CD8-positive, alpha-beta T cell (primary cell): ENCODE measurements at regions of chr5 and their contacts with region 1.

Region 1: GRCh38 chr5:98796197-98796972 is 22.9 kb downstream of the RGMB start:
- DNase-seq: peak in 7 of 9 experiments; percentile 17 to 62 (median 42)
- ATAC-seq: peak; percentile 62
- H3K4me3 ChIP-seq: no peak overlapping the region
- H3K4me3 Mint-ChIP-seq: no peak overlapping the region
- H3K27ac ChIP-seq: no peak overlapping the region
- H3K27ac Mint-ChIP-seq: no peak overlapping the region
- H3K4me1 ChIP-seq: no peaks in the 10 kb centered on the region
- H3K4me1 Mint-ChIP-seq: no peaks in the 10 kb centered on the region
- H3K27me3 ChIP-seq: no peaks in the 10 kb centered on the region
- H3K27me3 Mint-ChIP-seq: peaks cover 5% of the 10 kb centered on the region
- CTCF ChIP-seq: peak; percentile 78

Region 2: DNA sequence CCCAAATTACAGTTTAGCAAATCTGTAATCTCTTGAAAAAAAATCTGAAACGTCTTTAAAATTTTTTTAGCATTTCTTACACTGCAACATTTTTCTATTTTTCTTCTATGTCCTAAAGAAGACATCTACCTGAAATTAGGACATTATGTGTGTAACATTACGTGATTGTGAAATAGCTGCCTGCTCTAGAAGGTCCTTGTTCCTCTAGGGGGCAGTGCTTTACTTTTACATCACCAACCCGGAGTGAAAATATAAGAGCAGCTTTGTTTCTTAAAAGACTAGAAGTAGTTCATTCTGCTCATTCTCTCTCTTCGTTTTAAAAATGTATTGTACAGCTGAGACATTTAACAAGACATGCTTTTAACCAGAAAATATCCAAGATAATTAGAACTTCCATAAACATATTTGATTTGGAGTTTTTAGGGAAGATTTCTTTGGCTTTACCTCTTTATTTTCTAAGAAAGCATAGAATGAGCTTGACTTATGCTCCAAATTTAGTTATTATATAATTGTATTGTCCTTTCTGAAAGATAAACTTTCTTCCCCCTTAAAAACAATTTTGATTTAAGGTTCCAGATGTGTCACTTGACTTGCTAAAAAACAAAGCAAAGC is 1565.3 kb before region 1 on chr5:
- CTCF ChIA-PET with region 1: interaction called, 34 read pairs
- POLR2A ChIA-PET with region 1: no interaction called
- intact Hi-C with region 1: loop called in 1 of 2 experiments (anchors 2 kb)
- DNase-seq: peak in 3 of 9 experiments; percentile 13 to 62 (median 53)
- ATAC-seq: no peak
- H3K4me3 ChIP-seq: no peak overlapping the region
- H3K4me3 Mint-ChIP-seq: no peak overlapping the region
- H3K27ac ChIP-seq: no peak overlapping the region
- H3K27ac Mint-ChIP-seq: no peak overlapping the region
- H3K4me1 ChIP-seq: no peaks in the 10 kb centered on the region
- H3K4me1 Mint-ChIP-seq: no peaks in the 10 kb centered on the region
- H3K27me3 ChIP-seq: no peaks in the 10 kb centered on the region
- H3K27me3 Mint-ChIP-seq: peaks cover 2% of the 10 kb centered on the region
- CTCF ChIP-seq: peak; percentile 85

Region 3: GRCh38 chr5:98275980-98276379 is 520.4 kb before region 1 on chr5:
- CTCF ChIA-PET with region 1: no interaction called
- POLR2A ChIA-PET with region 1: no interaction called
- intact Hi-C with region 1: no loop called
- DNase-seq: no peak
- ATAC-seq: no peak
- H3K4me3 ChIP-seq: no peak overlapping the region
- H3K4me3 Mint-ChIP-seq: no peak overlapping the region
- H3K27ac ChIP-seq: no peak overlapping the region
- H3K27ac Mint-ChIP-seq: no peak overlapping the region
- H3K4me1 ChIP-seq: no peaks in the 10 kb centered on the region
- H3K4me1 Mint-ChIP-seq: no peaks in the 10 kb centered on the region
- H3K27me3 ChIP-seq: no peaks in the 10 kb centered on the region
- H3K27me3 Mint-ChIP-seq: no peaks in the 10 kb centered on the region
- CTCF ChIP-seq: no peak

Region 4: GRCh38 chr5:98690002-98690401 is 106.4 kb before region 1 on chr5:
- CTCF ChIA-PET with region 1: no interaction called
- POLR2A ChIA-PET with region 1: no interaction called
- intact Hi-C with region 1: no loop called
- DNase-seq: no peak
- ATAC-seq: no peak
- H3K4me3 ChIP-seq: no peak overlapping the region
- H3K4me3 Mint-ChIP-seq: no peak overlapping the region
- H3K27ac ChIP-seq: no peak overlapping the region
- H3K27ac Mint-ChIP-seq: no peak overlapping the region
- H3K4me1 ChIP-seq: no peaks in the 10 kb centered on the region
- H3K4me1 Mint-ChIP-seq: no peaks in the 10 kb centered on the region
- H3K27me3 ChIP-seq: no peaks in the 10 kb centered on the region
- H3K27me3 Mint-ChIP-seq: no peaks in the 10 kb centered on the region
- CTCF ChIP-seq: no peak

Region 5: DNA sequence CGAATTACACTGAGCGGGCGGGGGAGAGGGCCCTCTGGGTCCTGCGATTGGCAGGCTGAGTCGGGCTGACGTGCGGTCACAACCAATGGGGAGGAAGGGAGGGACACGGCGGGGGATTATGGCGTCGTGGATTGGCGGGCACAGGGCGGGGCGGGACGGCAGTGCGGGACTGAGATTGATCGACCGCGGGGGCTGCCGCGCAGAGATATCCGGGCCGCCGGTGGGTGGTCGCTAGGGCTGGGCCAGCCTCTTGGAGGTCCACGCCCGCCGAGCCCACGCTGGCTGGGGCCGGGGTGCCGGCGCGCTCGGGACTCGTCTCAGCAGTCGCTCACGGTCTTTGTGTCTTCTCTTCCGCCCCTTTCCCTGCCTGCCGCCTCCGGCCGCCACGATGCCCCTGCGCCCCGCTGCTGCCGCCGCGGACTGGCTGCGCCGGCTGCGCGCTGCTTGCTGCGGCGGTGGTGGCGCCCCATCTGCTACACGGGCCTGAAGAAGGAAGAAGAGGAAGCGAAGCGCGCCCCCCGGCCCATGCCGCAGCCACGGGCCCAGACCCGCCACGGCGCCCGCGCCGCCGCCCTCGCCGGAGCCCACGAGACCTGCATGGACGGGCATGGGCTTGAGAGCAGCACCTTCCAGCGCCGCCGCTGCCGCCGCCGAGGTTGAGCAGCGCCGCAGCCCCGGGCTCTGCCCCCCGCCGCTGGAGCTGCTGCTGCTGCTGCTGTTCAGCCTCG is 22.8 kb before region 1 on chr5 and contains the start of gene RGMB:
- CTCF ChIA-PET with region 1: interaction called, 41 read pairs
- POLR2A ChIA-PET with region 1: interaction called, 5 read pairs
- intact Hi-C with region 1: loop called in 1 of 2 experiments (anchors 1 kb)
- DNase-seq: peak; percentile 71 to 92 (median 89)
- ATAC-seq: peak; percentile 86
- H3K4me3 ChIP-seq: peak within 1 kb of the TSS; percentile 69 to 70
- H3K4me3 Mint-ChIP-seq: peak within 1 kb of the TSS; percentile 95
- H3K27ac ChIP-seq: peak within 1 kb of the TSS; percentile 37 to 53
- H3K27ac Mint-ChIP-seq: peak within 1 kb of the TSS; percentile 87
- H3K4me1 ChIP-seq: peaks cover 41% of the 10 kb centered on the region
- H3K4me1 Mint-ChIP-seq: peaks cover 56% of the 10 kb centered on the region
- H3K27me3 ChIP-seq: peaks cover 0 to 12% of the 10 kb centered on the region in 2 experiments
- H3K27me3 Mint-ChIP-seq: peaks cover 24% of the 10 kb centered on the region
- CTCF ChIP-seq: no peak
- total RNA-seq, gene RGMB: 5.8 to 6.6 TPM

Region 6: GRCh38 chr5:98780390-98780789 is 16.0 kb before region 1 on chr5:
- CTCF ChIA-PET with region 1: interaction called, 12 read pairs
- POLR2A ChIA-PET with region 1: no interaction called
- intact Hi-C with region 1: no loop called
- DNase-seq: no peak
- ATAC-seq: no peak
- H3K4me3 ChIP-seq: no peak overlapping the region
- H3K4me3 Mint-ChIP-seq: no peak overlapping the region
- H3K27ac ChIP-seq: no peak overlapping the region
- H3K27ac Mint-ChIP-seq: no peak overlapping the region
- H3K4me1 ChIP-seq: peaks cover 3% of the 10 kb centered on the region
- H3K4me1 Mint-ChIP-seq: peaks cover 15% of the 10 kb centered on the region
- H3K27me3 ChIP-seq: no peaks in the 10 kb centered on the region
- H3K27me3 Mint-ChIP-seq: peaks cover 23% of the 10 kb centered on the region
- CTCF ChIP-seq: no peak